ENCODE measurements at regions of chr17 and their contacts with region 1.

Region 1: DNA sequence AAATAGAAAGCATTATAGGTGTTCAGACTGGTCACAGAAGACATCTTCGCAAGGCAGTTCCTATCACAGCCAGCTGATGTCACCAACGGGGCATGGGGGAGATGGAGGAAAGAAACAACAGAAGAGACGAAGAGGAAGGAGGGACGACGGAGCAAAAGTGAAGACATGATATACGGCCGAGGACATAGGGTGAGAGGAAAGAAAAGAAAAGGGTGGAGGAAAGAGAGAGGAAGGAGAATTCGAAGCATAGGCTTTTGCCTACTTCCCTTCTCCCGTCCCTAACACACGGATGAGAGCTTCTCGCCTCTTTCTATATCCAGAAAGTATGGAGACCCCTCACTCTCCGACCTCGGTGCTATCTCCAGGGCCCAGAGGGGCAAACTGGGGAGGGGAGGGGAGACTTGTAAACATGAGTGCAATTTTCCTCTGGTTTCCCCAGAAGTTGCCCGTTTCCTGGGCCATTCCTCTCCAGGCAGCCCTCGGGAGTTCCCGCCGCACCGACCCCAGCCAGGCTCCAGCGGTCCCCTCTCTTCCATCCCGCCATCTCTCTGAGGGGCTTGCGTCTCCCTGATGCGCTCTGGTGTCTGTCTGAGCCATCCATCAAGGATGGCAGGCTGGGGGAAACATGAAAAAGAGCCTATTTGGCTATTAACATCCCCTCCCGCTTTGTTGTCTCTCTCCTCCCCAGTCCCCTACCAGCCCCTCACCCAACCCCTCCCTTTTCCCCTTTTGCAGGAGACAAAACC is 26.0 kb downstream of the COPZ2 start:
- DNase-seq: peak; percentile 40 to 65 (median 58)
- H3K4me3 ChIP-seq: peak overlapping the region; percentile 9 to 75 (median 55)
- H3K27ac ChIP-seq: no peak overlapping the region
- H3K4me1 ChIP-seq: peaks cover 0 to 38% (median 16%) of the 10 kb centered on the region in 4 experiments
- H3K27me3 ChIP-seq: peaks cover 0 to 35% (median 10%) of the 10 kb centered on the region in 5 experiments

Region 2: DNA sequence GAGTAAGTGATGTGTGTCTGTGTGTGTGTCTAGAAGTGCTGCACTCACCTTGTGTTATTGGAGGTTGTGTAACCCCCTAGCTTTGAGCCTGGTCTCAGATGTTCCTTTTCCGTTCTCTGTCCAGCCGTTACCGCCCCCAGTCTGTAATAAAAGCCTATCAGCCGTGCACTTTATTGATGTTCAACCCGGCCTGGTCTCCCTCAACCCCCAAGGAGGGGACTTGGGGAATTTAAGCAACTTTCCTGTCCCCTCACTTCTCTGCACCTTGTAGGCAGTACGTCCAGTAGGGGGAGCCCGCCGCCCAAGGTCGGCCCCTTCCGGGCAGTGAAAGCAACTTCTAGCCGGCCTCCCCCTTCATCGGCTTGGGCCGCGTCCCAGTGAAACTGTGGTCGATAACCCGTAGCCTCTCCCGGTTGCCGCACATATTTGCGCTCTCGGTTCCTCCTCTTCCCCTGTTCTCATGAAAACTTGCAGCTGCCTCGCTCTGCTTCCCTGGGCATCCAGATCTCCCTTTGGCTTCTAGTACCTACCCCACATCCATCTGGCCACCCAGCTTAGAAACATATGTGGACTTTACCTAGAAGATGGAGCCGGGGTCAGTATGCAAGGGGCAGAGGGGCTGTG is 62.3 kb before region 1 on chr17:
- CTCF ChIA-PET with region 1: interaction called, 44 read pairs
- POLR2A ChIA-PET with region 1: interaction called, 3 read pairs
- DNase-seq: peak; percentile 65 to 72 (median 72)
- H3K4me3 ChIP-seq: peak overlapping the region in 6 of 7 experiments; percentile 19 to 65 (median 41)
- H3K27ac ChIP-seq: peak overlapping the region in 1 of 2 experiments; percentile 17
- H3K4me1 ChIP-seq: peaks cover 2 to 58% (median 36%) of the 10 kb centered on the region in 4 experiments
- H3K27me3 ChIP-seq: no peaks in the 10 kb centered on the region

Region 3: GRCh38 chr17:47970704-47971463 is 40.7 kb before region 1 on chr17 and contains the start of gene CDK5RAP3:
- CTCF ChIA-PET with region 1: interaction called, 511 read pairs
- POLR2A ChIA-PET with region 1: interaction called, 5 read pairs
- DNase-seq: peak; percentile 98 to 99 (median 99)
- H3K4me3 ChIP-seq: peak within 1 kb of the TSS; percentile 64 to 93 (median 79)
- H3K27ac ChIP-seq: peak within 1 kb of the TSS in 1 of 2 experiments; percentile 71
- H3K4me1 ChIP-seq: peaks cover 0 to 24% (median 17%) of the 10 kb centered on the region in 4 experiments
- H3K27me3 ChIP-seq: no peaks in the 10 kb centered on the region